Activated naive CD4-positive, alpha-beta T cell treated with anti-CD3 and anti-CD28 coated beads for 36 hours (primary cell): ENCODE measurements at regions of chr6 and their contacts with region 1.

Region 1: GRCh38 chr6:45421709-45422502 is 44.2 kb upstream of the SUPT3H start:
- DNase-seq: peak; percentile 62
- H3K4me3 Mint-ChIP-seq: peak overlapping the region; percentile 93
- H3K27ac Mint-ChIP-seq: peak overlapping the region; percentile 88
- H3K4me1 Mint-ChIP-seq: peaks cover 29% of the 10 kb centered on the region
- H3K27me3 Mint-ChIP-seq: peaks cover 13% of the 10 kb centered on the region

Region 2: DNA sequence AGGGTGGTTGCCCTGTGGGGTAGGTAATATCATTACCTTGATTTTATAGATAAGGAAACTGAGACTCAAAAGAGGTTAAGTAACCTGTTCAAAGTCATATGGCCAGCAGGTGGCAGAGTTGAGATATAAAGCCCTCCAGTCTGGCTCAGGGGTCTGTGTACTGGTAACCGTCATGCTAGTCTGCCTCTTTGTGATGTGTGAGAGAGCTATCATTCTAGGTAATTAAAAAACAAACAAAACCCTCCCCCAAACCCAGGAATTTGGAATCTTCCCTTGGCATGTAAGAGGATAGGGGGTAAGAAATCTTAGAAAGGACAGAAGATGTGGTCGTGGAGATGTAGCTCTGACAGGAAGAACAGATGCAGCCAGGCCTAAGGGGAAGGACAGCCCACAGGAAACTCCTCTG is 828.4 kb before region 1 on chr6:
- CTCF ChIA-PET with region 1: interaction called, 3 read pairs
- intact Hi-C with region 1: loop called (anchors 1 kb)
- DNase-seq: peak; percentile 78
- H3K4me3 Mint-ChIP-seq: no peak overlapping the region
- H3K27ac Mint-ChIP-seq: no peak overlapping the region
- H3K4me1 Mint-ChIP-seq: peaks cover 3% of the 10 kb centered on the region
- H3K27me3 Mint-ChIP-seq: peaks cover 4% of the 10 kb centered on the region

Region 3: DNA sequence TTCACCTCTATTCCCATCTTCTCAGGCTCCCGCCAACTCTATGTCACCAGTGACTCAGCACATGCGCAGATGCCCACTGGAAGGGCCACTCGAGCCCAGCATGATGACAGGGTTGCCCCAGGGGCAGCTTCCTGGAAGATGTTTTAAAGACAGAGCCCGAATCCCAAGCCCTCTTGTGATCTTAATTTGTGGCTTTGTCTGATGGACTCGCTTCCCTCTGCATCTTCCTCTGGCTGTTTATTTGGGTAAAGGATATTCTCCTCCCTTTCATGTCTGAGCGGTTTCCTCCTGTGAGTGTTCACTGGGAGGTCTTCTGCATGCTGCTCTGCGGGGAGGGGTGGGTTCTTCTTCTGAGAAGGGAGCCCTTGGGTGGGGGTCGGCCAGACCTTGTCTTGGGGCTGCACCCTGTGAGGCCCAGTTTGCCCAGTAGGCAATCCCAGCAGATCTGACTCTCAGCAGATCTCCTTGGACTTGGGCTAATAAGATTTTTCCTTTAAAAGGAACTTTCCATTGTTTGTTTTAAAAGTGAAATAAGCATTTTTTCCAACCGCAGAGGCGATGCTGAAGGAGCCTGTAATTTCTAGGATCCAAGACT is 633.4 kb before region 1 on chr6:
- CTCF ChIA-PET with region 1: no interaction called
- intact Hi-C with region 1: loop called (anchors 5 kb)
- DNase-seq: no peak
- H3K4me3 Mint-ChIP-seq: no peak overlapping the region
- H3K27ac Mint-ChIP-seq: no peak overlapping the region
- H3K4me1 Mint-ChIP-seq: peaks cover 13% of the 10 kb centered on the region
- H3K27me3 Mint-ChIP-seq: no peaks in the 10 kb centered on the region

Region 4: GRCh38 chr6:45049188-45049843 is 372.6 kb before region 1 on chr6:
- CTCF ChIA-PET with region 1: no interaction called
- intact Hi-C with region 1: loop called (anchors 10 kb)
- DNase-seq: no peak
- H3K4me3 Mint-ChIP-seq: no peak overlapping the region
- H3K27ac Mint-ChIP-seq: peak overlapping the region; percentile 61
- H3K4me1 Mint-ChIP-seq: peaks cover 34% of the 10 kb centered on the region
- H3K27me3 Mint-ChIP-seq: no peaks in the 10 kb centered on the region

Region 5: GRCh38 chr6:45377554-45378333 is 44.2 kb before region 1 on chr6 and contains the start of gene SUPT3H:
- CTCF ChIA-PET with region 1: interaction called, 5 read pairs
- intact Hi-C with region 1: loop called (anchors 1 kb)
- DNase-seq: peak; percentile 91
- H3K4me3 Mint-ChIP-seq: peak within 1 kb of the TSS; percentile 92
- H3K27ac Mint-ChIP-seq: peak within 1 kb of the TSS; percentile 99
- H3K4me1 Mint-ChIP-seq: peaks cover 16% of the 10 kb centered on the region
- H3K27me3 Mint-ChIP-seq: no peaks in the 10 kb centered on the region
- total RNA-seq, gene SUPT3H: 15.7 to 17.9 TPM

Region 6: GRCh38 chr6:45590225-45590624 is 168.3 kb after region 1 on chr6:
- CTCF ChIA-PET with region 1: no interaction called
- intact Hi-C with region 1: loop called (anchors 2 kb)
- DNase-seq: no peak
- H3K4me3 Mint-ChIP-seq: no peak overlapping the region
- H3K27ac Mint-ChIP-seq: no peak overlapping the region
- H3K4me1 Mint-ChIP-seq: peaks cover 77% of the 10 kb centered on the region
- H3K27me3 Mint-ChIP-seq: no peaks in the 10 kb centered on the region

Region 7: DNA sequence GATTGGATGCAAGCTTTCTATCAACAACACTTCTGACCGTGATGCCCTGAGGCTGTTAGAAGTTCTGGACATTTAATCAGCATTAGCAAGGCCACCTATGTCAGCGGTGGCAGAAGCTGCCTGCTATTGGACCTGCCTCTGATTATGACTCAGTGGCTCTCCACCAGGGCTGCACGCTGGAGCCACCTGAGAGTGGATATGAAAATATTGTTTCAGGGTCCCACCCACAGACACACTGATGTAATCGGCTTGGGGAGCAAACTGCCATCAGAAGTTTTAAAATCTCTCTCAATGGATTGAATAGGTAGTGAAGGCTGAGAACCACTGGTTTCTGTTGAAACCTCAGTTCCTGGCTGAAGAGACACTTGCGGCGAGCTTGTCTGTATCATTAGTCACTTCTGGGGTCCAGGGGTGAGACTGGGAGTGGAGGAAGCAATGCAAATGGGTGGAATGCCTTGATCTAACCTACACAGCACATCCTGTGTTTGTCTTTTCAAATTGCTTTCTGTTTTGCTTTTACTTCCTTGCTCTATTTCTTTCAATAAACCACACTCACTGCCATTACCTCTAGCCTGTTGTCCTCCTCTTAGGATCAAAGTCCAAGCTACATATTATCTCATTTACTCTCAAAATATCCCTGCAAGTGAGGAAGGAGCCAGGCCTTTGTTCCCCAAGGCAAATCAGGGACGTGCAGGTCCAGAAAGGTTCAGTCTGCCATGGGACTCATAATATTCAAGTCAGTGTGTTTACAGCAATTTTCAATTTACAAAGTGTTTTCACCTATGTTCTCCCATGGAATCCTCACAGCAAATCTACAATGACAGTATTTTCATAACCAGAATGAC is 589.6 kb after region 1 on chr6:
- CTCF ChIA-PET with region 1: no interaction called
- intact Hi-C with region 1: loop called (anchors 5 kb)
- DNase-seq: peak; percentile 78
- H3K4me3 Mint-ChIP-seq: no peak overlapping the region
- H3K27ac Mint-ChIP-seq: peak overlapping the region; percentile 72
- H3K4me1 Mint-ChIP-seq: peaks cover 45% of the 10 kb centered on the region
- H3K27me3 Mint-ChIP-seq: peaks cover 6% of the 10 kb centered on the region